ENCODE measurements at regions of chr7 and their contacts with region 1.

Region 1: GRCh38 chr7:2354186-2354938 is at the start of gene EIF3B:
- DNase-seq: peak; percentile 91 to 94
- H3K4me3 ChIP-seq: peak within 1 kb of the TSS; percentile 94 to 99
- H3K27ac ChIP-seq: peak within 1 kb of the TSS; percentile 93 to 99
- H3K4me1 ChIP-seq: peaks cover 0 to 48% (median 36%) of the 10 kb centered on the region in 4 donors
- H3K27me3 ChIP-seq: no peaks in the 10 kb centered on the region
- CTCF ChIP-seq: no peak

Region 2: DNA sequence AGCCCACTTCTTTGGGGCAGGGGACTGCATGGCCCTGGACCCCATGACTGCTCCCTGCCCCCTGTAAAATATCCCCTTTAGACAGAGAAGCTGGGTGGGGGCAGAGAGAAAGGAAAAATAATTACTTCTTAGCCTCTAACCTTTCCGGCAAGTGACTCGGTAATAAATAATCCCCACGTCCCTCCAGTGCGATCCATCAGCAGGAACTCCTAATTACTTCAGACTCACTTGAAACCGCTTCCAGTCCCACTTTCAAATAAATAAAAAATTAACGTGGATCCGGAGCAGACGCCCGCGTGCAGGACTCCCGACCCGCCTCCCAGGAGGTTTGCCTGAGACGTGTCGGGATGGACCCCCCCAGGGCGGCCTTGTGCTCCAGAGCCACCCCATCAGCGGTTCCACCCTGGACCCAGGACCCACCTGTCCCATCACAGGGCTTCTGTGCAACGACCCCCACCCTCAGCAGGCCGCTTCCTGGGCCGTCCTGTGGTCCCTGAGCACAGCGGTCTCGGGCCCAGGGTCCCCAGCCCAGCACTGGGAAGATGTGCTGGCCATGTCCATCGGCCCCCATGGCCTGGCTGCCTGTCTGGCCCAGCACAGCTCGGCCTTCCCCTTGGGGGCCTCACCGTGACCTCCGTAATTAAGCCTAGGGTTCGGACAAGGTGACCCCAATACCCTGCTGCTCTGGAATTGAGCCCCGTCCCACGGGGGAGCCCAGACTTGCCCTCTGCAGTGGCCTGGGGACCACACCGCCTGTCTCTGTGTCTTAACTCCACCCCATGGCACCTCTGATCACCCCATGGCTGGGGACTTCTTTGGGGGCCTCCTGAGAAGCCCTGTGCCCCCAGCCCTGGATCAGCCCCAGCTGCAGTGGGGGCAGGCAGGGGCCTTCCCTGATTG is 1013.7 kb before region 1 on chr7:
- intact Hi-C with region 1: no loop called
- DNase-seq: no peak
- H3K4me3 ChIP-seq: no peak overlapping the region
- H3K27ac ChIP-seq: no peak overlapping the region
- H3K4me1 ChIP-seq: no peaks in the 10 kb centered on the region
- H3K27me3 ChIP-seq: peaks cover 0 to 48% of the 10 kb centered on the region in 2 donors
- CTCF ChIP-seq: no peak

Region 3: DNA sequence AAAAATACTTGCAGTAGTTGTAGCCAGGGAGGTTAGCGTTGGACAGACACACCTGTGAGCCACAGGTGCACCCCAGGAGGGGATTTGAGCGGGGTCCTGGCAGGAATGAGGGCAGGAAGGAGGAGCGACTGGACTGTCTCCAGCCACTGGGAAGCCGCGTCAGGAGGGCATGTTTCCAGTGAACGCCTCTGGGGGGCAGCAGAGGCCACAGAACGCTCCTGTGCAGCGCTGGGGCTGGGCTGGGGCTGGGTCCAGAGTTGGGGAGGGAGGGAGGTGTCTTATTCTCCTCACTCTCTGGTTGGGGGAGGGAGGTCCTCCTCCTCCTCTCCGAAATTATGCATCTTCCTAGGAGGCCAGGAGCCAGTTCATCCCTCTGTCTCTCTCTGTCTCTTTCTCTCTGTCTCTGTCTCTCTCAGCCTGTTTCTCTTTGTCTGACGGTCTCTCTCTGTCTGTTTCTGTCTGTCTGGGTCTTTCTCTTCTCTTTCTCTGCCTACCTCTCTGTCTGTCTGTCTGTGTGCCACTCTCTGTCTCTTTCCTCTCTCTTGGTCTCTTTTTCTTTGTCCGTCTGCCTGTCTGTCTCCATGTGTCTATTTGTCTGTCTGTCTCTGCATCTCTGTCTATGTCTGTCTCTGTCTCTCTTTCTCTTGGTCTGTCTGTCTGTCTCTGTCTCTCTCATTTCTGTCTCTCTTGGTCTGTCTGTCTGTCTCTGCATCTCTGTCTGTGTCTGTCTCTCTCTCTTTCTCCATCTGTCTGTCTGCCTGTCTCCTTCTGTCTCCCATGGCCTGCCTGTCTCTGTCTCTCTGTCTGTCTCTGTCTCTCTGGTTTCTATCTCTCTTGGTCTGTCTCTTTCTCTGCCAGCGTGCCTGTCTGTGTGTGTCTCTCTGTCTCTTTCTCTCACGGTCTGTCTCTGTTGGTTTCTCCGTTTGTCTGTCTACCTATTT is 774.6 kb before region 1 on chr7:
- intact Hi-C with region 1: loop called (anchors 5 kb)
- DNase-seq: peak; percentile 53 to 80
- H3K4me3 ChIP-seq: no peak overlapping the region
- H3K27ac ChIP-seq: no peak overlapping the region
- H3K4me1 ChIP-seq: peaks cover 0 to 7% (median 0%) of the 10 kb centered on the region in 4 donors
- H3K27me3 ChIP-seq: no peaks in the 10 kb centered on the region
- CTCF ChIP-seq: peak; percentile 78 to 82

Region 4: DNA sequence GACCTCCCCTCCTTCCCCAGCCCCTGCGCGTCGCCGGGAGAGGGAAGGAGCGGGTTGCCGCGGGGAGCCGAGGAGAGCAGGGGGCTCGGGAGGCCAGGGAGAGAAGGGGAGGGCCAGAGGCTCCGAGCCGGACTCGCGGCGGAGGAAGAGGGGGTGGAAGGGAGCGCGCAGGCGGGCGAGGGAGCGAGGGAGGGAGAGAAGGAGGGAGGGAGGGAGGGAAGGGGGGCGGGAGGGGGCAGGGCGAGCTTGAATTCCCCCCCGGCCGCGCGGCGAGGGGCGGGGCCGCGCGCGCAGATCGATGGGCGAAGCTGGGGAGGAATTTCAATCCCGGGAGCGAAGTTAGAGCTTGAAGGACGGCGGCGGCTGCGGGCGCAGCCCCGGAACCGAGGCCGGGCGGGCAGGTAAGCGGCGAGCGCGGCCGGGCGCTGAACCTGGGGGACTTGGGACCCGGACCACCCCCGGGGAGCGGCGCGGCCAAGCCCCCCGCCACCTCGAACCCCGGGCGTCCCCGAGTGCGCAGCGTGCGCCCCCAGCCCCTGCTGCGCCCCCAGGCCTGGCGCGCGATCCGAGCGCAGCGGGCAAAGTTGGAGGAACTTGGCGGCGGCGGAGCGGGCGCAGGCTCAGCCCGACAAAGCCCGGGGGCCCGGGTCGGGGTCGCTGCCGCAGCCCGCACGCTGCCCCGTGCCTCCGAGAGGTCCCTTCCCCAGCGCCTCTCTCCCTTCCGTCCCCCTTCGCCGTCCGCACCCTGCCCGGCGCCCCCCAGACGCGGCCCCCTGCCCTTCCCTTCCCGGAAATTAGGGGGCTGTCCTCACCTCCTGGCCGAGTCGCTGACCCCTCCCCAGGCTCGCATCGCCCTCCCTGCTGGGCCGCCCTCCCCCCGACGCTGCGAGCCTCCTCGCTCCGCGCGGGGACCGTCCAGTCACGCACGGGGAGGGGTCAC is 684.1 kb before region 1 on chr7 and contains the start of gene ELFN1:
- intact Hi-C with region 1: loop called (anchors 10 kb)
- DNase-seq: peak; percentile 7 to 64
- H3K4me3 ChIP-seq: peak within 1 kb of the TSS in 1 of 2 donors; percentile 46
- H3K27ac ChIP-seq: no peak within 1 kb of the TSS
- H3K4me1 ChIP-seq: peaks cover 0 to 52% (median 41%) of the 10 kb centered on the region in 4 donors
- H3K27me3 ChIP-seq: peaks cover 0 to 98% of the 10 kb centered on the region in 2 donors
- CTCF ChIP-seq: no peak

Region 5: GRCh38 chr7:2241580-2242540 is 112.5 kb before region 1 on chr7 and contains the starts of genes MRM2 and NUDT1:
- intact Hi-C with region 1: loop called (anchors 5 kb)
- DNase-seq: peak; percentile 81 to 87
- H3K4me3 ChIP-seq: peak within 1 kb of the TSS; percentile 84 to 88
- H3K27ac ChIP-seq: peak within 1 kb of the TSS; percentile 64
- H3K4me1 ChIP-seq: peaks cover 0 to 27% (median 18%) of the 10 kb centered on the region in 4 donors
- H3K27me3 ChIP-seq: no peaks in the 10 kb centered on the region
- CTCF ChIP-seq: no peak

Region 6: GRCh38 chr7:2314209-2314955 is 40.0 kb before region 1 on chr7 and contains the start of gene SNX8:
- intact Hi-C with region 1: loop called (anchors 5 kb)
- DNase-seq: peak; percentile 77 to 90
- H3K4me3 ChIP-seq: peak within 1 kb of the TSS; percentile 95
- H3K27ac ChIP-seq: peak within 1 kb of the TSS; percentile 76 to 77
- H3K4me1 ChIP-seq: peaks cover 0 to 10% (median 6%) of the 10 kb centered on the region in 4 donors
- H3K27me3 ChIP-seq: no peaks in the 10 kb centered on the region
- CTCF ChIP-seq: no peak

Region 7: DNA sequence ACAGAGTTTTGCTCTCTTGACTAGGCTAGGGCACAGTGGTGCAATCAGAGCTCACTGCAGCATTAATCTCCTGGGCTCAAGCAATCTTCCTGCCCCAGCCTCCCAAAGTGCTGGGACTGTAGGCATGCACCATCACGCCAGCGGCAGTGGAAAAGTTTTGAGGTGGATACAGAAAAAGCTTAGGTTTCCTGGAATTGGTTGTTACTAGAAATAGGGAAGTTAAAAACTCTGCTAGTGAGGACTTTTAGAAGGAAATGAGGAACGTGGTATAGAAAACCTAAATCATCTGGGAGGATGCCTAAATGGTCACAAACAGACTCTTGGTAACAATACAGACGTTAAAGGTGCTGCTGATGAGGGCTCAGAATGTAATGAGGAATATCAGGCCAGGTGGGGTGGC is 29.2 kb before region 1 on chr7:
- intact Hi-C with region 1: no loop called
- DNase-seq: no peak
- H3K4me3 ChIP-seq: no peak overlapping the region
- H3K27ac ChIP-seq: no peak overlapping the region
- H3K4me1 ChIP-seq: no peaks in the 10 kb centered on the region
- H3K27me3 ChIP-seq: no peaks in the 10 kb centered on the region
- CTCF ChIP-seq: no peak

Measured in tibial artery (tissue), 4 donors.